BJ (cell line): ENCODE measurements at regions of chr2 and their contacts with region 1.

Region 1: GRCh38 chr2:24971536-24972314 is at the start of gene DNAJC27:
- DNase-seq: peak; percentile 85
- H3K4me3 ChIP-seq: peak within 1 kb of the TSS; percentile 89
- H3K27me3 ChIP-seq: no peaks in the 10 kb centered on the region
- CTCF ChIP-seq: no peak
- polyA plus RNA-seq, gene DNAJC27: 2.3 and 3.4 TPM in 2 replicates

Region 2: DNA sequence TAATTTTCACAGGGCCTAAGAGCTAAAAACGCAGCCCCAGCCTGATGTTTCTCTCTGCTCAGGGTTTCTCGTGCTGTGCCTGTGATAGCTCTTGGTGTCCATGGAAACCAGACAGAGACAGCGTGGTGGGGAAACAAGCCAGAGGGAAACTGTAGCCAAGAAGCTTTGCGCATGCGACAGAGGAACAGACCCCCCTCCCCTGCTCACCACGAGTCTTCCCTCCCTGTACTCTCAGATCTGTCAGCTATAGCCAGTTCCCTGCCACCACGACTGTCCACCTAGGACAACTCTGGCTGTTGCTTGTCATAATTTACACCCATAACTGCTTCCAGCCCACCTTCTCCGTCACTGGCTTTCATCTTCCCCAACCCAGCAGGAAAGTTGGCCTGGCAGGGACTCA is 13.2 kb after region 1 on chr2:
- CTCF ChIA-PET with region 1: interaction called, 14 read pairs
- POLR2A ChIA-PET with region 1: interaction called, 3 read pairs
- DNase-seq: no peak
- H3K4me3 ChIP-seq: no peak overlapping the region
- H3K27me3 ChIP-seq: no peaks in the 10 kb centered on the region; the same call in 1 of the 2 replicates
- CTCF ChIP-seq: no peak

Region 3: GRCh38 chr2:25000503-25001324 is 29.0 kb after region 1 on chr2:
- CTCF ChIA-PET with region 1: interaction called, 10 read pairs
- POLR2A ChIA-PET with region 1: no interaction called
- DNase-seq: no peak
- H3K4me3 ChIP-seq: no peak overlapping the region
- H3K27me3 ChIP-seq: peaks cover 2% of the 10 kb centered on the region; the same call in 1 of the 2 replicates
- CTCF ChIP-seq: no peak

Region 4: GRCh38 chr2:25123682-25124081 is 152.0 kb after region 1 on chr2:
- CTCF ChIA-PET with region 1: interaction called, 154 read pairs
- POLR2A ChIA-PET with region 1: no interaction called
- DNase-seq: no peak
- H3K4me3 ChIP-seq: no peak overlapping the region
- H3K27me3 ChIP-seq: no peaks in the 10 kb centered on the region; the same call in 1 of the 2 replicates
- CTCF ChIP-seq: no peak

Region 5: DNA sequence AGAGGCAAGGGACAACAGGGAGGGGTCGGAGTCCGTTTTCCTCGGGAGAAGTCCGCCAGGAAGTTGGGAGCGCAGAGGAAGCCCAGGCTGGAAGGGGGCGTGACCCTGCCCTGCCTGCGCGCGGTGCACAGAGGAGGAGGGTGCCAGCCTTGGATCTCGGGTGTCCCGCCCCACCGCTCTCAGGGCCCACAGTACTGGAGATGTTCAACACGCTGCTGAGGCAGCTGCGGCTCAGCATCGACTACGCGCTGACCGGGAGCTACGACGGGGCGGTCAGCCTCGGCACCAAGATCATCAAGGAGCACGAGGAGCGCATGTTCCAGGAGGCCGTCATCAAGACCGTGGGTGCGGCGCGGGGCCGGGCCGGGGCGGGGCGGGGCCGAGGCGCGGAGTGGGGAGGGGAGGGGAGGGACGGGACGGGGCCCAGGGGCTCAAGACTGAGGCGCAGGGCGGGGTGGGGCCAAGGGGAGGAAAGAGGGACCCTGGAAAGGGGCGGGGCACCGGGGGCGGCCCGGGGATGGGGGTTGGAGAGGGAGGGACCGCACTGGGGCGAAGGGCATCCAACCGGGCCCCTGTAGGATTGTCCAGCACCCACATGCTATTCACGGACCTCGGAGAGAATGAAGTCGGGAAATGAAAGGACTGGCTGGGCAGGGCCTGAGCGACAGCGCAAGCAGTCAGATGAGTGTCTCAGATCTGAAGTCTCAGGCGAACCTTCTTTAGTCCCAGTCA is 160.0 kb after region 1 on chr2:
- CTCF ChIA-PET with region 1: interaction called, 154 read pairs
- POLR2A ChIA-PET with region 1: interaction called, 3 read pairs
- DNase-seq: no peak
- H3K4me3 ChIP-seq: no peak overlapping the region
- H3K27me3 ChIP-seq: peaks cover under 1% of the 10 kb centered on the region; the same call in 1 of the 2 replicates
- CTCF ChIP-seq: no peak

Region 6: DNA sequence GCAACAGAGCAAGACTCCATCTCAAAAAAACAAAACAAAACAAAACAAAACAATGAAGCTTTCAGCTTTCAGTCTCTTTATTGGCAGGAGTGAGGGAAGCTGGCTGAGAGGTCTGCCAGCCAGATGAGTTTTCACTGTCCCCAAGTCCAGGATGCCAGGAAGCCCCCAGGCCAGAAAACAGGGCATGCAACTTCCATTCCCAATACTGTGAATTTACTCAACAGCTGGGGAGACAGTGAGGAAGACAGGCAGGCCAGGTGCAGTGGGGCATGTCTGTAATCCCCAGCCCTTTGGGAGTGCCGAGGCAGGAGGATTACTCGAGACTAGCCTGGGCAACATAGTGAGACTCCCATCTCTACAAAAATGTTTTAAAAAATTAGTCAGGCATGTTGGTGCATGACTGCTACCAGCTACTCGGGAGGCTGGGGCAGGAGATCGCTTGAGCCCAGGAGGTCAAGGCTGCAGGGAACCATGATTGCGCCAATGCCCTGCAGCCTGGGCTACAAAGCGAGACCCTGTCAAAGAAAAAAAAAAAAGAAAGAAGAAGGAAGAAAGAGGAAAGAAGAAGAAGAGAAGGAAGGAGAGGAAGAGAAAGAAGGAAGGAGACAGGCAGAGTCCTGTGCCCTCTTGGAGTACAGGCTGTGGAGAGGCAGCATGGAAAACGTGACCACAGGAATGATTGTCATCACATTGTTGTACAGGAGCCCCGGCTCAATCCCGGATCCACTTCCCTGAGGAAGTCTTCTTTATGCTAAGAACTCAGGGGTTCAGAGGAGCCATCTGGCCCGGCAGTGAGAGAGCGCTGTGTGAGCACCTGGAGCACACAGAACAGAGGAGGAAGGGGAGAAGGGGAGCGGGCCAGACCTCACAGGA is 225.8 kb after region 1 on chr2:
- CTCF ChIA-PET with region 1: interaction called, 32 read pairs
- POLR2A ChIA-PET with region 1: no interaction called
- DNase-seq: no peak
- H3K4me3 ChIP-seq: no peak overlapping the region
- H3K27me3 ChIP-seq: no peaks in the 10 kb centered on the region; the same call in 1 of the 2 replicates
- CTCF ChIP-seq: no peak

Region 7: DNA sequence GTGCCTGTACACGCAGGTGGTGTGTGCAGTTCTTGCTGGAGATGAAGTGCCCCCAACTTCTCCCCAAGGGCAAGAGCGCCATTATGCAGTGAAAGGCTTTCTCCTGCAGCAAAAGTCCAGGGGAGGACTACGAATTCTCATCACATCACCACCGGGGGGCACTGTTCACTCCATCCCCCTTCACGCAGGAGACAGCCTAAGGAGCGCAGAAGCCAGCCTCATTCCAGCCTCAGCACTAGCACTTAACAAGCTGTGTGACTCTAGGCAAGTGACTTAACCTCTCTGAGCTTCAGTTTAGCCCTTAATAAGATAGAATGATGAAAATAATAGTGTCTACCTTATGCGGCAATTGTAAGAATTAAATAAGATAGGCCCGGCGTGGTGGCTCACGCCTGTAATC is 337.7 kb after region 1 on chr2:
- CTCF ChIA-PET with region 1: no interaction called
- POLR2A ChIA-PET with region 1: no interaction called
- DNase-seq: no peak
- H3K4me3 ChIP-seq: no peak overlapping the region
- H3K27me3 ChIP-seq: no peaks in the 10 kb centered on the region
- CTCF ChIP-seq: peak; percentile 40